Transverse colon (tissue), 4 donors: ENCODE measurements at regions of chr2 and their contacts with region 1.

Region 1: DNA sequence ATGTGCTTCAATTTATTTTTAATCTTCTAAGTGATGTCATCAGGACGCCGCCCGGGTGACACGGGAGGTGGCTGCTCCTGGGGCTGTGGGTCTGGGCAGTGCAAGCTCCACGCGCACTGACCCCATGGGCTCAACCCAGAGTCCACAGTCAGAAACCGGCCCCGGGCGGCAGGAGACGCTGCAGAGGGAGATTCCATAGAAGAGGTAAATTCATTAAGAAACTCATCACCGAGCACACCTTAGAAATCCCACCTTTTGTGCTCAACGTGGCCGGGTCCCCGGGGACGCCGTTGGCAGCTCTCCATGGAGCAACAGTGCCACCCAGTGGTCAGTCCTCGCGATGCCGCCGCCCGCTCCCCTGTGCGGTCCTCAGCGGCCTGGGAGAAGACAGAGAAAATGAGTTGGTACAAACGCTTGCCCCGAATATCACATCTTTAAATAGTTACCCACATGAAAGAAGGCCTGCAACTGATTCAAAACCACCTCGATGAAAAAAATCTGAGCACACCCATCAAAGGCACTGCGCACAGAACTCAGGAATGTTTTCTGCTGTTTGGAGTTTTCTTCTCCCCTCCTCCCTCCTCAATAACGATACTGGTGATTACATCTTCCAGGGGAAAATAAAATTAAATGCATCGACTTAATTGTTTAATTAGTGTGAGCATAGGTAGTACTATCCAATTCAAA is 92.6 kb downstream of the CMPK2 start:
- DNase-seq: peak; percentile 58
- H3K4me3 ChIP-seq: peak overlapping the region in 1 of 4 donors; percentile 26
- H3K27ac ChIP-seq: no peak overlapping the region
- H3K4me1 ChIP-seq: peaks cover 0 to 5% (median 0%) of the 10 kb centered on the region in 4 donors
- H3K27me3 ChIP-seq: peaks cover 29% of the 10 kb centered on the region
- CTCF ChIP-seq: peak; percentile 76 to 94 (median 89)
- EP300 ChIP-seq: no peak
- POLR2A ChIP-seq: no peak

Region 2: DNA sequence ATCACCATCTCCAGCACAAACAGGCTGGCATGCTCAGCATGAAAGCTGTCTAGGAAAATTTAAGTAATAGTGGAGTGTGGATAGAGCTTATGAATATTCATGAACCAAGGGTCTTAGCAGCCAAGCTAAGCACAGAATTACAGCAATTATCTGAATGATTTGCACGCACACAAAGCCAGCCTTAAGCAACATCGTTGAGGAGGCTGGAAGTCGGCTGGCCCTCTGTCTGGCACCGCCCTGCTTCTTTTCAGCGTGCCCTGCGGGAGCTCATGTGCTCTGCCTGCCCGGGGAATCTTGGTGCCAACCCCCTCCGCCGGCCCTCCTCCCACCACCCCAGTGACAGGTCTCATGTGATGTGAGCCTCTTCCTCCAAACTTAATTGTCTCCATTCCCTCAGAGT is 447.5 kb before region 1 on chr2:
- in situ Hi-C with region 1: loop called in 1 of 4 experiments (anchors 25 kb)
- intact Hi-C with region 1: no loop called
- DNase-seq: no peak
- H3K4me3 ChIP-seq: no peak overlapping the region
- H3K27ac ChIP-seq: no peak overlapping the region
- H3K4me1 ChIP-seq: no peaks in the 10 kb centered on the region
- H3K27me3 ChIP-seq: no peaks in the 10 kb centered on the region
- CTCF ChIP-seq: no peak
- EP300 ChIP-seq: no peak
- POLR2A ChIP-seq: no peak